ENCODE measurements at regions of chr5 and their contacts with region 1.

Region 1: GRCh38 chr5:97854871-97855762 is 672.1 kb upstream of the RIOK2 start:
- DNase-seq: peak; percentile 30
- ATAC-seq: peak; percentile 93 to 96

Region 2: DNA sequence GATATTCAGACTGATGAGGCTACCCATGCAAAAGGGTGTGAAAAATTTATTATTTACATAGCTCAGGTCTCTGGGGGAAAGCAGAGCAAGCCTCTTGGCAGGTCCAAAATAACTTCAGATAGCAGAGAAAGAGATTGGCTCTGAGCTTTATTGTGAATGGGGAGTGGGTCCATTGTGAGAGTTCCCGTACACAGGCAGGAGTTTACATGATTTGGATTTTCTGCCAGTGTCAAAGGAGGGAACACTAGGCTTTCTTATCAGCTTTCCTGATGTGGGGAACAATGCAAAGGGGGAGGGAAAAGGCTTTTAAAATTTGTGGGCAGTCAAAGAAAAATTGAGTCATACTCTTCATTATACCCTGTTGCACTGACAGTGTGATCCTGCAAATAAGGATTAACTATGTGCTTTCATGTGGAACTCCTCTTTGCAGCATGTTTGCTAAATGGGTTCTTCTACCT is 57.1 kb before region 1 on chr5:
- intact Hi-C with region 1: loop called in 1 of 2 experiments (anchors 10 kb)
- DNase-seq: no peak
- ATAC-seq: no peak

Region 3: DNA sequence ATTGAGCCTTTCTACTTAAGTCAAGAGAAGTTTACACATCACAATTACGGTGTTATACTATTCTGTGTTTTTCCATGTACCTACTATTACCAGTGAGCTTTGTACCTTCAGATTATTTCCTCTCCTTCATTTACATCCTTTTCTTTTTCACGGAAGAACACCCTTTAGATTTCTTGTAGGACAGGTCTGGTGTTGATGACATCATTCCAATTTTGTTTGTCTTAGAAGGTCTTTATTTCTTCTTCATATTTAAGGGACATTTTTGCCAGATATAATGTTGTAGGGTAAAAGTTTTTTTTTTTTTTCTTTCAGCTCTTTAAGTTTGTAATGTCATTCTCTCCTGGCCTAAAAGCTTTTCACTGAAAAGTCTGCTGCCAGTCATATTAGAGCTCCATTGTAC is 35.0 kb before region 1 on chr5:
- intact Hi-C with region 1: no loop called
- DNase-seq: no peak
- ATAC-seq: no peak